Right ventricle myocardium superior (tissue), 1 donor: ENCODE measurements at regions of chr20 and their contacts with region 1.

Region 1: GRCh38 chr20:5126512-5127203 is at the start of gene CDS2:
- DNase-seq: peak; percentile 100
- ATAC-seq: peak; percentile 96
- total RNA-seq, gene CDS2: 61.9 TPM

Region 2: DNA sequence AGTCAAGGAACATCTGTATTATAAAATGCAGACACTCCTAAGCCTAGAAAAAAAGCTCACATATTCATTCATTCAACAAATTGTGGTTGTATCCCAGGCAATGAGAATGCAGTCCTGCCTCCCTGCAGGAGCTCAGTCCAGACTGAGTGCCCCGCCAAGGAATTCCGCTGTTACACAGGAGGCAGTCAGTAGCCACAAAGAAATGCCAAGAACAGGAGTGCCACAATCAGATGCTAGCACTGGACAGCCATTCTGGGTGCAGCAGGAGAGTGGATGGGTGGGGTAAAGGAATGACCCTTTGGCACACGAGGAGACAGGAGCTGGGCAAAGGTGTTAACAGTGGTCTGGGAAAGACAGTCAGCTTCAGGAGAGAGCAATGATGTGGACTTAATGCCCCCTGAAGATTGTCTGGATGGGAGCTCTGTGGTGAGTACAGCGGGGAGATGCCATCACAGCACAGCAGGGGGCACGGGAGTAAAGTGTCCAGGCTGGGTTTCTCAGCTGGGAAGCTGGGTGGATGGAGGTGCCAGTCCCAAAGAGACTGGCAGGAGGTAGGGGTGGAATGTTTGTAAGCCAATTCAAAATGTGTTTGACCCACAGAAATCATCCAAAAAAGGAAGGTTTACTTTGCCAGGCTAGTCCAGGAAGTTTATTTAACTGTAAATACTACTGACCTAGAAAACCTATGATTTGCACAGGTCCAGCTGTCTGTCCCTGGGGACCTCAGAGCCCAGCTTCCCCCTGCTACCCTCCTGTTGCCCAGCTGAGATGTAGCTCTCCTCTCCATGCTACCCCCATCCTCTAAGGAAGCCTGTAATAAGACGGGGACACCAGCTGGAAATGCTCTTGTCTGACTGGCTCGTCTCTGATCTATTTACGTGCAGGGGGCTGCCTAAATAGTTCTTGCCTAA is 209.4 kb before region 1 on chr20:
- intact Hi-C with region 1: no loop called
- DNase-seq: no peak
- ATAC-seq: no peak

Region 3: DNA sequence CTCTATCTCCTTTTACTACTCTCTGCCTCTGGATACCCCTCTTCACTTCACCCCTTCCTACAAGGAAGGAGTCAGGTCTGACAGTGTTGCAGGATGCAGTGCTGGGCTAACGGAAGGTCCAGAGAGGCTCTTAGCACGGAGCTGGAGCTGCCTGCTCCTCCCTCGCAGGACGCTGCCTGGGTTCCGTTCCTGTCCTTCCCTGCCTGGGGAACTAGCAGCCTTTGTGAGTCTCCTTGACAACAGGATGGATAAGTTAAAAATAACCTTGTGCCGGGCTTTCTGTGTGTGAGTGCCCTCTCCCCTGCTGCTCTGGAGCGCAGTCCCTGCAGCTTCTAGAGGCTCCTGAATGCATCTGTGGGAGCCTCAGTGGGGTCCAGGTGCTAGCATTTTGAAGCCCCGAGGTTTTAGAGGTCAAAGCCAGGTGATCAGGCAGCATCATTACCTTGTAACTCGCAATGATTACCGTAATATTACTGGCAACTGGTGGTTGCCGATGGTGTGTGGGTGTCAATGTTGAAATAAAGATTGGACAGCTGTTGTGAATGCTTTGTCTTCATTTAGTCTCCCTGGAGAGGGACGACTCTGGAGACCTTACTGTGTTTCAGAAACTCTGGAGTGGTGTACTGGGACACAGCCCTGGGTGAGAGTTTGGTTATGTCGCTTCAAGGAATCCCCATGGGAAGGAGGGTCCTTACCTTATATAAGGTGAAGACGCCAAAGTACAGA is 44.6 kb after region 1 on chr20:
- intact Hi-C with region 1: loop called (anchors 5 kb)
- DNase-seq: peak; percentile 69
- ATAC-seq: peak; percentile 83

Region 4: DNA sequence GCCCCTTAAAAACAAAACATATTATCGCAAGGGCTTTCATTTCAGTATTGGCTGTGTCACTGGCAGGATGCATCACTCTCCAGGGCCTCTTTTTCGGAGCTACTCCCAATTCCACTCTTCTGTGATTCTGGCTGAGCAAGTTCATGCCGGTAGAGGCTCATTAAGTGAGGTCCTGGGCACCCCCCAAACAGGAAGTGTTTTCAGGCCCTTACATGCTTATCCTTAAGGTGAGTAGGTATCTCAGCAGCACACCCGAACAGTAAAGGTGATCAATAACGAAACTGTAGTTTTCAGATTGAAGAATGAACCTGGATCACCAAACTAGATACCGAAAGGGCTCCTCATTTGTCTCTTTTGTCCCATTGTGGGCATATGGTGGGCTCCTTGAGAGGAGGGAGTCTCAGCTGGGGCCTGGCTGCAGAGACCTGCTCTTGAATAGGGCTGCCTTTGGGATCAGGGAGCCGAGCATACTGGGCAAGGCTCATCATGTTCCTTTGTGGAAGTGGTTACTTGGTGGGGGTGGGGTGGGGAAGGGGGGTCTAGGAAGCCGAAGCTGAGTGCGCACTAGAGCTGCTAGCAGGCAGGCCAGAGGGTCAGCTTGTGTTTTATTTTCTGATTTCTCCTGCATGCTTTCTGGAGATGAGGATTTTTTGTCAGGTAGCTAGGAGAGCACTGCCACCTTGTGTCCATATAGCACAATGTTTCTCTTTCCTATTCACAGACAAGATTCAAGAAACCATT is 65.3 kb after region 1 on chr20:
- intact Hi-C with region 1: loop called (anchors 1 kb)
- DNase-seq: no peak
- ATAC-seq: peak; percentile 72

Region 5: GRCh38 chr20:5222919-5223634 is 96.4 kb after region 1 on chr20:
- intact Hi-C with region 1: no loop called
- DNase-seq: peak; percentile 62
- ATAC-seq: peak; percentile 84